Aorta (tissue), 5 donors: ENCODE measurements at regions of chr12 and their contacts with region 1.

Region 1: GRCh38 chr12:53344824-53345485 is 8.8 kb upstream of the SP7 start:
- DNase-seq: peak; percentile 78 to 92
- ATAC-seq: peak; percentile 95
- H3K4me3 ChIP-seq: peak overlapping the region; percentile 72 to 76
- H3K27ac ChIP-seq: peak overlapping the region; percentile 9 to 64
- H3K4me1 ChIP-seq: no peaks in the 10 kb centered on the region
- H3K27me3 ChIP-seq: no peaks in the 10 kb centered on the region

Region 2: GRCh38 chr12:53327435-53328042 is 17.4 kb before region 1 on chr12:
- intact Hi-C with region 1: loop called in 1 of 2 experiments (anchors 1 kb)
- DNase-seq: no peak
- ATAC-seq: no peak
- H3K4me3 ChIP-seq: no peak overlapping the region
- H3K27ac ChIP-seq: no peak overlapping the region
- H3K4me1 ChIP-seq: no peaks in the 10 kb centered on the region
- H3K27me3 ChIP-seq: no peaks in the 10 kb centered on the region